Posterior vena cava (tissue), 2 donors: ENCODE measurements at regions of chr18 and their contacts with region 1.

Region 1: DNA sequence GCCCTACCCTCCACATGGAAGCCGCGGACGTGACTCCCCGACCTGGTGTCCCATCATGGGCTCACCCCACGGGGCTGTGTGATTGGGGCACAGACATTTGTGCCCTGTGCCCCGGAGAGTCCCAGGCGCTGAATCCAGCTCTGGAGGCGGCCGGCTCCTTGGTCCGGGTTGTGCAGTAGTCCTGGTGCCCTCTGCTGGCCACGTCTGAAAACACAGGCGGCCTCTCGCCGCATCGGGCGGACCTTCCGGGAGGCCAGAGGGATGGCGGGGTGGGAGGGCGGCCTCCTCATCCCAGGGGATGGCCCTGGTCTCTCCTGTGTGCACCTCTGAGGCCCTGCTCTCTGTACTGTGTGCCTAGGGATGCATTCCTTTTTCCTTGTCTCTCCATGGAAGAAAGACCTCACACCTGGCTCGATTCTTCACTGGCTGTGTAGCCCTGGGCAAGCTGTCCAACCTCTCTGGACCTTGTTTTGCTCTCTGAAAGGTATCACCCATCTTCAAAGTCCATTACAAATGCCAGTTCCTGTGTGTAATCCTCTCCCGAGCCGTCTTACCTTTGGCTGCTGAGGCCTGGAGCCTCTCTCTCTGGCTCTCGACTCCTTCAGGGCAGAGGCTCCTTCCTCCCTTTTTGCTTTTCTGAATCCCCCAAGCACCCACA is 27.6 kb downstream of the CELF4 start:
- DNase-seq: peak; percentile 93

Region 2: GRCh38 chr18:37346048-37346447 is 191.9 kb before region 1 on chr18:
- intact Hi-C with region 1: loop called (anchors 5 to 10 kb)
- DNase-seq: no peak

Region 3: GRCh38 chr18:37385846-37386778 is 151.9 kb before region 1 on chr18:
- intact Hi-C with region 1: loop called (anchors 5 to 10 kb)
- DNase-seq: no peak

Region 4: DNA sequence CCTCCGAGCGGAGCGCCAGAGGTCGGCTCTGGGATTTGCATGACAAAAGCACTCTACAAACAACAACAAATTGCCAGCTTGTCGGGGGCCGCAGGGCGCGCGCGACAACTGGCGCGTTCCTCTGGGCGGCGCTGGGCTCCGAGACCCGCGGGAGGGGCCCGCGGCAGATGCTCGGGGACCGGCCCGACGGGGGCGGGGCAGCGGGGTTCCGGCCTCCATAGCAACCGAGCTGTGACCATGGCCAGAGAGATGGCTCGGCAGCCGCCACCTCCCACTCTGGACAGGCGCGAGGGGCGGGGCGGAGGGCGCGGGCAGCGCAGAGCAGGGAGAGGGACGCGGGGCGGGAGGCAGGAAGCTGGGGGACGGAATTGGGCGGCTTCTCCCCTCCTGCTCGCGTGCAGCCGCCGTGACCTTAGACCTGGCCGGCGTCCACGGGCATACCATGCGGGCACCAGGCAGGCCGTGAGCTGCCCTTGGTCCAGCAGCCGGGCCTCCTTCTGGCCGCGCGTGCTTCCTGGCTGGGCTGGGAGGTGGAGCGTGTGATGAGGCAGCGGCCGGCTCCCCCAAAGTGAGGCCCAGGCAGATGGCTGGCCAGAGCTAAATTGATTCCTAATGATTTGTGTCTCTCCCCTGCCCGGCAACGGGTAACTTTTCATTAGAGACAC is 143.9 kb before region 1 on chr18:
- intact Hi-C with region 1: loop called (anchors 5 to 10 kb)
- DNase-seq: peak; percentile 86

Region 5: GRCh38 chr18:37435996-37436395 is 102.0 kb before region 1 on chr18:
- intact Hi-C with region 1: loop called in 1 of 2 experiments (anchors 5 kb)
- DNase-seq: no peak

Region 6: DNA sequence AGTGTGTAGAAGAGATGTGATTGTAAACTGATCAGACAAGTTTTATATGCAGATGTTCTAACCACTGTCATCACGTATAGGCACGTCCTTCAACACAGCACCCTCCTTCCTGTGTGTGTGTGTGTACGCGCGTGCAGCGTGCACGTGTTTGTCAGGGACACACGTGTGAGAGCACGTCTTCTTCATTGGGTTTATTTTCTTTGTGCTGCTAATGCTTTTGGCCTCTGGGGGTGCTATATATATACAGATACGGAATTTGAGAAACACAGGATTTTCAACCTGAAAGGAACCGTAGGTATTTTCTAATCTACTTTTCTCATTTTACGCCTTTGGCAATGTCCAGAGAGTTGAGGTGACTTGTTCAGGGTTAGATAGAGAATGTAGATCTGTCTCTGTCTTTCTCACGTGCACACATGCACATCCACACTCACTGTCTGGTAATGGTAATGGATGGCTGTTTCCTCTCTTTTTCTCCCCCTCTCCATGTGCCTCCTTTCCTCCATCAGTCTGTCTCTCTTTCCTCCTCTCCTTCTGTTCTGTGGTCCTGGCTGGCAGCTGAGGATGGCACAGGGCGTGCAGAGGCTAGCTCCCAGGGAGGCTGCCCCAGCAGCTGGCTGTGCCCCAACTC is 41.0 kb after region 1 on chr18:
- intact Hi-C with region 1: no loop called
- DNase-seq: no peak

Region 7: GRCh38 chr18:37962316-37962966 is 424.4 kb after region 1 on chr18:
- intact Hi-C with region 1: no loop called
- DNase-seq: no peak